Heart left ventricle (tissue), 16 donors: ENCODE measurements at regions of chr2 and their contacts with region 1.

Region 1: GRCh38 chr2:187594801-187595200 is 40.6 kb upstream of the TFPI start:
- DNase-seq: no peak
- ATAC-seq: no peak
- H3K4me3 ChIP-seq: no peak overlapping the region
- H3K27ac ChIP-seq: no peak overlapping the region
- H3K4me1 ChIP-seq: no peaks in the 10 kb centered on the region
- H3K27me3 ChIP-seq: no peaks in the 10 kb centered on the region
- CTCF ChIP-seq: peak in 4 of 12 donors; percentile 14 to 33 (median 26)
- POLR2A ChIP-seq: no peak

Region 2: GRCh38 chr2:188506843-188507242 is 912.0 kb after region 1 on chr2:
- intact Hi-C with region 1: loop called in 3 of 10 experiments (anchors 10 kb)
- DNase-seq: no peak
- ATAC-seq: no peak
- H3K4me3 ChIP-seq: no peak overlapping the region
- H3K27ac ChIP-seq: no peak overlapping the region
- H3K4me1 ChIP-seq: no peaks in the 10 kb centered on the region
- H3K27me3 ChIP-seq: no peaks in the 10 kb centered on the region
- CTCF ChIP-seq: no peak
- POLR2A ChIP-seq: no peak